ENCODE measurements at regions of chr5 and their contacts with region 1.

Region 1: GRCh38 chr5:140244525-140245025 is 58.3 kb downstream of the PFDN1 start:
- DNase-seq: peak; percentile 77 to 90 (median 81)
- ATAC-seq: peak; percentile 85
- H3K4me3 ChIP-seq: no peak overlapping the region
- H3K27ac ChIP-seq: no peak overlapping the region
- H3K4me1 ChIP-seq: peaks cover 15 to 27% of the 10 kb centered on the region in 2 experiments
- H3K27me3 ChIP-seq: no peaks in the 10 kb centered on the region
- CTCF ChIP-seq: peak; percentile 81 to 90 (median 90)
- EP300 ChIP-seq: no peak
- POLR2A ChIP-seq: no peak; the same call in 1 of the 2 replicates
- RAD21 ChIP-seq: peak; percentile 90 to 91

Region 2: GRCh38 chr5:140207250-140207964 is 37.2 kb before region 1 on chr5:
- CTCF ChIA-PET with region 1: no interaction called
- POLR2A ChIA-PET with region 1: no interaction called
- in situ Hi-C with region 1: no loop called
- intact Hi-C with region 1: no loop called
- DNase-seq: no peak
- ATAC-seq: no peak
- H3K4me3 ChIP-seq: no peak overlapping the region
- H3K27ac ChIP-seq: no peak overlapping the region
- H3K4me1 ChIP-seq: peaks cover 4% of the 10 kb centered on the region in 2 experiments; a peak in 3 of 5 replicates
- H3K27me3 ChIP-seq: no peaks in the 10 kb centered on the region
- CTCF ChIP-seq: no peak
- EP300 ChIP-seq: no peak
- POLR2A ChIP-seq: no peak
- RAD21 ChIP-seq: no peak

Region 3: DNA sequence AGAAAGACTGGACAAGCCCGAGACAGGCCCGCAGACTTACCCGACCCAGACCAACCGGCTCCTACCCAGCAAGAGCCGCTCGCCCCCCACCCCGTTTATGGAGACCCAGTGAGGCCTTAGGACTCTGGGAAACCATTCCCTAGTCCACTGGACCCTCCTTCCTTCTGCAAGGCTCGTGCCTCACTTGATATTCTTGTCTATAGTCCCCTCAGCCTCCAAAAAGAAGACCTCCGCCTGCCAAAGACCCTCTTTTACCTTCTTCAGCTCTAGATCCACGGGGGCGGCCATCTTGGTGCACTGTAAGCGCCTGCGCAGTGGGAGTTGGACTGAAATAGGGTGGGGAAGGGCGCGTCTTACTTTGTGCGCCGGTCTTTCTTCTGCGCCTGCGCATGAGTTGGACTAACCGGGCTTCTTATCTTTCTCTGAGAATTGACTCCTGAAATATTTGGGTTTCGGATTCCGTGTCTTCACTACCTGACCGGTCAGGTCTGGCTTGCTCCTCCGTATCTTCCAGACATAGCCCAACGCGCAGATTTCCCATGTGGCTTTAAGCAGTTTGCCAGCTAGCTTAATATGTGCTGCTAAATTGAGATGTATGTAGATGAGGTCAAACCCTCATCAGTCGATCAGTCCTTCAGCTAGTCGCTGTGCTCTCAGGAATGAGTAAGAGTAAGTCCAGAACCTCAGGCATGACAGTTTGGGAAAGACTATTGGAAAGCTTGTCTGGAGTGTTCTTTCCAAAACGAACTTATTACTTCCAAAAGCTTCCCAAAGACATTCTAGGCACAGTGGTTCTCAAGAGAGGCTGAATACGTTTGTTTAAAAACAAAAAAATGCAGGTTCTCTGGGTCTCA is 58.4 kb after region 1 on chr5 and contains the start of gene PFDN1:
- CTCF ChIA-PET with region 1: no interaction called
- POLR2A ChIA-PET with region 1: no interaction called
- in situ Hi-C with region 1: loop called (anchors 5 kb)
- intact Hi-C with region 1: no loop called
- DNase-seq: peak; percentile 97 to 98 (median 98)
- ATAC-seq: peak; percentile 97
- H3K4me3 ChIP-seq: peak within 1 kb of the TSS; percentile 87
- H3K27ac ChIP-seq: peak within 1 kb of the TSS; percentile 91
- H3K4me1 ChIP-seq: peaks cover 4% of the 10 kb centered on the region in 2 experiments; a peak in 3 of 5 replicates
- H3K27me3 ChIP-seq: no peaks in the 10 kb centered on the region
- CTCF ChIP-seq: no peak
- EP300 ChIP-seq: no peak
- POLR2A ChIP-seq: peak; percentile 90
- RAD21 ChIP-seq: no peak
- polyA plus RNA-seq, gene PFDN1: 152 to 215 TPM

Region 4: GRCh38 chr5:140351609-140352334 is 107.2 kb after region 1 on chr5:
- CTCF ChIA-PET with region 1: interaction called, 37 read pairs
- POLR2A ChIA-PET with region 1: interaction called, 4 read pairs
- in situ Hi-C with region 1: loop called (anchors 5 kb)
- intact Hi-C with region 1: loop called (anchors 1 kb)
- DNase-seq: peak; percentile 68 to 84 (median 69)
- ATAC-seq: peak; percentile 85
- H3K4me3 ChIP-seq: no peak overlapping the region
- H3K27ac ChIP-seq: no peak overlapping the region
- H3K4me1 ChIP-seq: peaks cover 0 to 13% of the 10 kb centered on the region in 2 experiments; a peak in 3 of 5 replicates
- H3K27me3 ChIP-seq: no peaks in the 10 kb centered on the region
- CTCF ChIP-seq: peak; percentile 75 to 88 (median 80)
- EP300 ChIP-seq: no peak
- POLR2A ChIP-seq: no peak
- RAD21 ChIP-seq: peak; percentile 77 to 79

Region 5: GRCh38 chr5:140557136-140557805 is 312.7 kb after region 1 on chr5 and contains the start of gene SRA1:
- CTCF ChIA-PET with region 1: no interaction called
- POLR2A ChIA-PET with region 1: no interaction called
- in situ Hi-C with region 1: no loop called
- intact Hi-C with region 1: loop called (anchors 10 kb)
- DNase-seq: peak; percentile 83 to 95 (median 91)
- ATAC-seq: peak; percentile 94
- H3K4me3 ChIP-seq: peak within 1 kb of the TSS; percentile 77
- H3K27ac ChIP-seq: peak within 1 kb of the TSS; percentile 86
- H3K4me1 ChIP-seq: peaks cover 23 to 27% of the 10 kb centered on the region in 2 experiments
- H3K27me3 ChIP-seq: no peaks in the 10 kb centered on the region
- CTCF ChIP-seq: peak in 1 of 3 experiments; percentile 13; a peak in 1 of 6 replicates
- EP300 ChIP-seq: no peak
- POLR2A ChIP-seq: peak; percentile 96
- RAD21 ChIP-seq: no peak
- polyA plus RNA-seq, gene SRA1: 24.1 to 33.6 TPM

Region 6: DNA sequence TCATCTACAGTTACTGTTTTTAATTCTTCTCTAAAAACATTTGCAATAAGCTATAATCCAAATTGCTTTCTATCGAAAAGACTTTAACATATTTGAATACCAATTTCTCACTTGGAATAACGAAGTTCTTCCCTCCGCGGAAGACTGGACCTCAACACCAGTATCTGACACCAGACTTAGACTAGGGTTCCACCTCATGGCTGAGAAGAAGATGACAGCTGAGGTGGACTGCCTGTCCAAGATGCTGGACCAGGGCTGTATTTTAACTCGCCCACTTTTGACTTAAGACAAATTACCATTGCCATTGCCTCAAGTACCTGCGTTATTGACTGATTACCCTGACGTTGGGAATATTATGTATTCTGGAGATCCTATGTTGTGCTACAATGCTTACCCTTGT is 489.8 kb after region 1 on chr5:
- CTCF ChIA-PET with region 1: no interaction called
- POLR2A ChIA-PET with region 1: no interaction called
- in situ Hi-C with region 1: loop called (anchors 10 kb)
- intact Hi-C with region 1: loop called (anchors 5 kb)
- DNase-seq: peak; percentile 59 to 72 (median 64)
- ATAC-seq: peak; percentile 99
- H3K4me3 ChIP-seq: no peak overlapping the region
- H3K27ac ChIP-seq: no peak overlapping the region
- H3K4me1 ChIP-seq: no peaks in the 10 kb centered on the region
- H3K27me3 ChIP-seq: no peaks in the 10 kb centered on the region
- CTCF ChIP-seq: peak; percentile 73 to 84 (median 75)
- EP300 ChIP-seq: no peak
- POLR2A ChIP-seq: no peak
- RAD21 ChIP-seq: peak; percentile 56 to 84

Measured in K562 (cell line).